ENCODE measurements at regions of chr11 and their contacts with region 1.

Region 1: GRCh38 chr11:12693479-12694181 is 19.4 kb downstream of the TEAD1 start:
- DNase-seq: no peak
- ATAC-seq: peak; percentile 74

Region 2: DNA sequence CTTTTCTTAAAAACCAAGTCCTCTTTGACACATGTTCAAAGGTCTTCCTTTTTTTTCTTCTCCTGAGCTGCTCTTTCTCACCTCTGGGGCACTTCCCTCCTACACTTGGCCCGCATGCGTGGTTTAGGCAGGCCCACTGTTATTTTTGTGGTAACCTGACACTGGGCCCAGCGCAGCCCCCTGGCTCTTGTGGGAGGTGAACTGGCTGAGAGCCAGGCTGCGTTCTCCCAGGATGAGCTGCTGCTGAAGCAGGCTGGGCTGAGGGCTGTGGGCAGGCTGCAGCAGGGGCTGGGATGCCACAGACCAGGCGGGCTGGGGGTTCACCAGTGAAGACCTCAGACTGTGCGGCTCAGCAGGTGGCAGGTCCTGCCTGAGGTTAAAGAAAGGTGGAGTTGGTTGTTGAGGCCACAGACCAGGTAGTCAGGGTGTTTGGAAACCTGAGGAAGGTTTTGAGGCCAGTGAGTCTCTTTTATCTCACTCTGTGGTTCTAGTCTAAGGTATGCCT is 53.0 kb after region 1 on chr11:
- intact Hi-C with region 1: loop called (anchors 5 kb)
- DNase-seq: peak; percentile 77
- ATAC-seq: peak; percentile 76